Ascending aorta (tissue), 2 donors: ENCODE measurements at regions of chr6 and their contacts with region 1.

Region 1: DNA sequence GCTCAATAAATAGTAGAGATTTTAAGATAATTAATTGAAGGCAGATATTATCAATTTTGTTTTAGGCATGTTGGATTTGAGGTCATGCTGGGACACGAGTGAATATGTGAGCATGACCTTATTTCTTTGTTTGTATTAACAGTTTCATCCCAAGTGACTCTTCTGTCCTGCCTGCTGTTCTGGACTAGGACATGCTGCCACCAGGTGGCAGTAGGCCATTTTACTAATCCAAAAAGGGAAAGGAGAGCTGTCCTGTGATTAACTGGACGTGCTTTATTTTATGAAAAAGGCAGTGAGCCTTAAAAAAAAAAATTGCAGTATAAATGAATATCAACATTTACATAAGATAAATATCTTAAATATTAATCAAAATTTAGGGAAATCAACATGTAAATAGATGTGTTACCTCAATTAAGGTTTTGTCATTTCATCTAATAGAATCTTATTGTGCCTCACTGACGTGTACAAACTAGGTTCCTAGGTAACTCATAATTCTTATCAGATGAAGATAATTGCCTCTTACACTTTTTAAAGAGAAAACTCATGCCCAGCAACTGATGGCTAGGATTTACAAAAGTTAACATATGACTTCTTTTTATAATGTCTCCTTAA is 49.8 kb downstream of the FRK start:
- DNase-seq: peak in 1 of 2 donors; percentile 84
- H3K4me3 ChIP-seq: peak overlapping the region; percentile 6 to 9
- H3K27ac ChIP-seq: no peak overlapping the region
- H3K4me1 ChIP-seq: peaks cover 3 to 40% of the 10 kb centered on the region in 2 donors
- H3K27me3 ChIP-seq: no peaks in the 10 kb centered on the region
- CTCF ChIP-seq: peak; percentile 63 to 85 (median 80)

Region 2: GRCh38 chr6:115932481-115932880 is 78.4 kb before region 1 on chr6:
- intact Hi-C with region 1: loop called (anchors 5 kb)
- DNase-seq: no peak
- H3K4me3 ChIP-seq: no peak overlapping the region
- H3K27ac ChIP-seq: peak overlapping the region; percentile 82 to 89
- H3K4me1 ChIP-seq: peaks cover 8 to 11% of the 10 kb centered on the region in 2 donors
- H3K27me3 ChIP-seq: no peaks in the 10 kb centered on the region
- CTCF ChIP-seq: no peak

Region 3: GRCh38 chr6:115997990-115998585 is 12.8 kb before region 1 on chr6:
- intact Hi-C with region 1: no loop called
- DNase-seq: no peak
- H3K4me3 ChIP-seq: no peak overlapping the region
- H3K27ac ChIP-seq: no peak overlapping the region
- H3K4me1 ChIP-seq: no peaks in the 10 kb centered on the region
- H3K27me3 ChIP-seq: no peaks in the 10 kb centered on the region
- CTCF ChIP-seq: no peak

Region 4: GRCh38 chr6:116060572-116061283 is 49.8 kb after region 1 on chr6 and contains the start of gene FRK:
- intact Hi-C with region 1: loop called (anchors 2 kb)
- DNase-seq: peak in 1 of 2 donors; percentile 82
- H3K4me3 ChIP-seq: peak within 1 kb of the TSS; percentile 50 to 85
- H3K27ac ChIP-seq: peak within 1 kb of the TSS; percentile 84 to 85
- H3K4me1 ChIP-seq: peaks cover 0 to 9% of the 10 kb centered on the region in 2 donors
- H3K27me3 ChIP-seq: no peaks in the 10 kb centered on the region
- CTCF ChIP-seq: peak in 2 of 3 experiments; percentile 32 to 50
- total RNA-seq, gene FRK: 8.4 TPM

Region 5: GRCh38 chr6:116100419-116101301 is 89.8 kb after region 1 on chr6 and contains the start of gene NT5DC1:
- intact Hi-C with region 1: loop called (anchors 1 kb)
- DNase-seq: peak; percentile 58 to 91
- H3K4me3 ChIP-seq: peak within 1 kb of the TSS; percentile 84 to 85
- H3K27ac ChIP-seq: peak within 1 kb of the TSS; percentile 94 to 98
- H3K4me1 ChIP-seq: peaks cover 9 to 33% of the 10 kb centered on the region in 2 donors
- H3K27me3 ChIP-seq: no peaks in the 10 kb centered on the region
- CTCF ChIP-seq: peak in 2 of 3 experiments; percentile 34 to 47
- total RNA-seq, gene NT5DC1: 4.6 TPM